ENCODE measurements at regions of chr11 and their contacts with region 1.

Region 1: GRCh38 chr11:26993965-26994457 is at the start of gene FIBIN:
- DNase-seq: peak; percentile 55 to 77
- H3K4me3 ChIP-seq: peak within 1 kb of the TSS; percentile 92 to 94
- H3K27ac ChIP-seq: peak within 1 kb of the TSS; percentile 88 to 96
- H3K4me1 ChIP-seq: peaks cover 0 to 60% (median 21%) of the 10 kb centered on the region in 4 donors
- H3K27me3 ChIP-seq: no peaks in the 10 kb centered on the region
- CTCF ChIP-seq: peak in 1 of 2 experiments; percentile 12

Region 2: GRCh38 chr11:26830757-26831156 is 163.3 kb before region 1 on chr11:
- intact Hi-C with region 1: loop called (anchors 10 kb)
- DNase-seq: no peak
- H3K4me3 ChIP-seq: no peak overlapping the region
- H3K27ac ChIP-seq: no peak overlapping the region
- H3K4me1 ChIP-seq: peaks cover 0 to 24% (median 6%) of the 10 kb centered on the region in 4 donors
- H3K27me3 ChIP-seq: no peaks in the 10 kb centered on the region
- CTCF ChIP-seq: no peak

Region 3: GRCh38 chr11:26947379-26947844 is 46.6 kb before region 1 on chr11:
- intact Hi-C with region 1: loop called (anchors 10 kb)
- DNase-seq: peak; percentile 72 to 77
- H3K4me3 ChIP-seq: no peak overlapping the region
- H3K27ac ChIP-seq: peak overlapping the region; percentile 49 to 58
- H3K4me1 ChIP-seq: peaks cover 0 to 91% (median 54%) of the 10 kb centered on the region in 4 donors
- H3K27me3 ChIP-seq: no peaks in the 10 kb centered on the region
- CTCF ChIP-seq: no peak

Measured in tibial artery (tissue), 4 donors.